Aorta (tissue), 5 donors: ENCODE measurements at regions of chr9 and their contacts with region 1.

Region 1: DNA sequence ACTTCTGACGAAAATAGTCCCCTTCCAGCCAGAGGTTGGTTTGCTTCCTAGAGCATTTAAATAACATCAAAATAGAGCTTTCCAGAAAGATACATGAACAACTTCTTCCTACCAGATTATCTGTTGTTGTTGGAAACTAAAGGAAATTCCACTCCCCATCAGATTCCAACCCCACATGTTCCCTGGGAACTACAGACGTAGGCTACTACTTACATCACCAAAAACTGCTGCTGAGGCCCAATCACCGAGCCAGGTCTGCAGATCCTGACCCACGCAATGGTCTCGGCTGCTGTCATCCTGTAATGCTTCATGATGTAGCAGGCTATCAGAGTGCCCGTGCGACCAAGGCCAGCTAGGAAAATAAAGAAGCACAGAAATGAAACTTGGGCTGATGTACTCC is 73.4 kb downstream of the HABP4 start:
- DNase-seq: peak; percentile 82 to 88
- ATAC-seq: peak; percentile 93
- H3K4me3 ChIP-seq: no peak overlapping the region
- H3K27ac ChIP-seq: peak overlapping the region; percentile 77 to 99
- H3K4me1 ChIP-seq: peaks cover 0 to 2% of the 10 kb centered on the region in 2 donors
- H3K27me3 ChIP-seq: no peaks in the 10 kb centered on the region

Region 2: DNA sequence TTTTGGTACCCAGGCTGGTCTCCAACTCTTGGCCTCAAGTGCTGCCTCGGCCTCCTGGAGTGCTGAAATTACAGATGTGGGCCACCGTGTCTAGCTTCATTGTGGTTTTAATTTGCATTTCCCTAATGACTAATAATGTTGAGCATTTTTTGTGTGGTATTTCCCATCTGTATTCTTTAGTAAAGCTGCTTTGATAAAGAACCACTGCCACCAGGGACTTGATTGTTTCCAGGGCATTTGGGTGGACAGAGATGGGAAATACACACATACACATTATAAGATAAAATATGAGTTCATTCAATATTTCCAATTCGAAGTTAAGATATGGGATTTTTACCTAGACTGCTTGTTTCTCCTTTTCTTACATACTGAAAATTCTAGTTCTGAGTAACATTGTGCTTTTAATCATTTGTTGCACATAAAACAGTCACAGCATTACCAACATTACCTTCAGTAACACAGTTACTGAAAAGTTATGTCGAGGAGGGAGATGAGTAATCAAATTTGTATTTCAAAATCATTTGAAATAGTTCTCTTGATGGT is 44.5 kb before region 1 on chr9:
- intact Hi-C with region 1: no loop called
- DNase-seq: no peak
- ATAC-seq: no peak
- H3K4me3 ChIP-seq: no peak overlapping the region
- H3K27ac ChIP-seq: no peak overlapping the region
- H3K4me1 ChIP-seq: peaks cover 0 to 4% of the 10 kb centered on the region in 2 donors
- H3K27me3 ChIP-seq: no peaks in the 10 kb centered on the region

Region 3: DNA sequence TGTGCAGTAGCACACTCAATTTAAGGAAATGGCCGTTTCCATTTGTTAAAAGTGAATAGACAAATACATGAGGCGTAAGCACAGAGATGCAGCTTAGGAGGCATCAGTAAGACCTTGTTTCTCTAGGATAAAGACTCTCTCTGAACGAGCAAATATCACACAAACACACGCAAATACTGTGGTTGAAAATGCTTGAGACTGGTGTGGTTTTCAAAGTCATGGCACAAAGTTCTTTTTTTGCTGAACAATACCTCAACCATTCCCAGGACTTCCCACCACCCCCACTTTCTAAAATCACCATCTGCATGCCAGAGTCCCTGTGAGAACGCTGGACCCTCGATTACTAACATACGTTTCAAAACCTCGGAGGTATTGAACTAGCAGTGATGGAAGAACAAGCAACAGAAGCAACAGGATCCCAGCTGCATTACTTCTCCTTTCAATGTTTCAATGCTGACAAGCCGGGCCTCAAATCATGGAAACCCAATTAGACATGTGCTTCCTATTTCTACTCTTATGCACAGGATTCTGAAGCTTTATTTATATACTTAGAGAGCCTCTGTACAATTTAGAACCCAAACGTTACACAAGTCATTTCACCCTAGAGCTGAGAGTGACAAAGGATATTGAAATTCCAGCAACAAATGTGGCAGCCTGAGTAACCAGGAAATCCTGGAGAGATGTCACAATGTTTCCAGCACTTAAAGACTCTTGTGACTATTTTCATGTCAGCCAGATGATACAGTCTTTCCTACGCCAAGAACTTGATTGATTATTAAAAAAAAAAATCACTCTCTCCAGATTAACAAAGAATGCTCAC is 32.4 kb after region 1 on chr9:
- intact Hi-C with region 1: loop called (anchors 5 kb)
- DNase-seq: no peak
- ATAC-seq: no peak
- H3K4me3 ChIP-seq: no peak overlapping the region
- H3K27ac ChIP-seq: peak overlapping the region; percentile 17 to 33
- H3K4me1 ChIP-seq: peaks cover 5% of the 10 kb centered on the region in 2 donors
- H3K27me3 ChIP-seq: no peaks in the 10 kb centered on the region

Region 4: GRCh38 chr9:96688187-96688586 is 164.8 kb after region 1 on chr9:
- intact Hi-C with region 1: no loop called
- DNase-seq: no peak
- ATAC-seq: no peak
- H3K4me3 ChIP-seq: no peak overlapping the region
- H3K27ac ChIP-seq: peak overlapping the region in 1 of 2 donors; percentile 14
- H3K4me1 ChIP-seq: no peaks in the 10 kb centered on the region
- H3K27me3 ChIP-seq: no peaks in the 10 kb centered on the region